CD8-positive, alpha-beta T cell (primary cell): ENCODE measurements at regions of chr2 and their contacts with region 1.

Region 1: GRCh38 chr2:73494031-73494430 is 108.4 kb downstream of the ALMS1 start:
- DNase-seq: no peak
- ATAC-seq: no peak
- H3K4me3 ChIP-seq: no peak overlapping the region
- H3K4me3 Mint-ChIP-seq: no peak overlapping the region
- H3K27ac ChIP-seq: no peak overlapping the region
- H3K27ac Mint-ChIP-seq: no peak overlapping the region
- H3K4me1 ChIP-seq: no peaks in the 10 kb centered on the region
- H3K4me1 Mint-ChIP-seq: peaks cover under 1% of the 10 kb centered on the region
- H3K27me3 ChIP-seq: no peaks in the 10 kb centered on the region
- H3K27me3 Mint-ChIP-seq: no peaks in the 10 kb centered on the region
- CTCF ChIP-seq: no peak

Region 2: DNA sequence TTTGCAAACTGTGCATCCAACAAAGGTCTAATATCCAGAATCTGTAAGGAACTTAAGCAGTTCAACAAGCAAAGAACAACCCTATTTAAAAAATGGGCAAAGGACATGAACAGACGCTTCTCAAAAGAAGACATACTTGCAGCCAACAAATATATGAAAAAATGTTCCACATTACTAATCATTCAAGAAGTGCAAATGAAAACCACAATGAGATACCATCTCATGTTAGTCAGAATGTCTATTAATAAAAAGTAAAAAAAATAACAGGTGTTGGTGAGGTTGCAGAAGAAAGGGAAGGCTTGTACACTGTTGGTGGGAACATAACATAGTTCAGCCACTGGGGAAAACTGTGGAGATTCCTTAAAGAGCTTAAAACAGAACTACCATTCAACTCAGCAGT is 22.0 kb after region 1 on chr2:
- CTCF ChIA-PET with region 1: no interaction called
- POLR2A ChIA-PET with region 1: no interaction called
- intact Hi-C with region 1: loop called in 1 of 2 experiments (anchors 1 kb)
- DNase-seq: no peak
- ATAC-seq: no peak
- H3K4me3 ChIP-seq: no peak overlapping the region
- H3K4me3 Mint-ChIP-seq: no peak overlapping the region
- H3K27ac ChIP-seq: no peak overlapping the region
- H3K27ac Mint-ChIP-seq: no peak overlapping the region
- H3K4me1 ChIP-seq: no peaks in the 10 kb centered on the region
- H3K4me1 Mint-ChIP-seq: no peaks in the 10 kb centered on the region
- H3K27me3 ChIP-seq: no peaks in the 10 kb centered on the region
- H3K27me3 Mint-ChIP-seq: no peaks in the 10 kb centered on the region
- CTCF ChIP-seq: no peak